ENCODE measurements at regions of chr2 and their contacts with region 1.

Region 1: GRCh38 chr2:24382363-24383073 is 22.2 kb upstream of the ITSN2 start:
- DNase-seq: peak; percentile 78
- ATAC-seq: peak; percentile 97
- H3K4me3 ChIP-seq: no peak overlapping the region
- H3K27ac ChIP-seq: no peak overlapping the region
- H3K4me1 ChIP-seq: no peaks in the 10 kb centered on the region
- H3K27me3 ChIP-seq: no peaks in the 10 kb centered on the region
- CTCF ChIP-seq: peak; percentile 62

Region 2: DNA sequence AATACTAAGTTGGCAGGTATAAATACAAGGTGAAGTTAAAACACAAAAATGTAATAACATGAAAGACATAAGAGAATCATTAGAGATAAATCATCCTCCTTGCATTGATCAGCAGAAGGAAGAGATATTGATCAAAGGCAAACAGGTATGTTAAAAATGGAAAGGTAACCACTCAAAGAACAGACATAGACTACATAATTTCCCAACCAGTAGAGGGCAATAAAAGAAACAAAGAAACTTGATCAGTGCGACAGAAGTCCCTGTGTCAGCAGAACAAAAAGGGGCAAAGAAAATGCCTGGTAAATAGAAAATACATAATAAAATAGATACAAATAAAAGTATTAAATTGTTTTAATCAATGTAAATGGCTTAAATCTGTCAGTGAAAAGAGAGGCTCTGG is 154.0 kb before region 1 on chr2:
- CTCF ChIA-PET with region 1: no interaction called
- POLR2A ChIA-PET with region 1: no interaction called
- intact Hi-C with region 1: loop called (anchors 1 kb)
- DNase-seq: peak; percentile 59
- ATAC-seq: peak; percentile 74
- H3K4me3 ChIP-seq: no peak overlapping the region
- H3K27ac ChIP-seq: no peak overlapping the region
- H3K4me1 ChIP-seq: peaks cover 6% of the 10 kb centered on the region; the same call in 1 of the 2 replicates
- H3K27me3 ChIP-seq: no peaks in the 10 kb centered on the region
- CTCF ChIP-seq: peak; percentile 59

Region 3: GRCh38 chr2:24471662-24472061 is 89.1 kb after region 1 on chr2:
- CTCF ChIA-PET with region 1: interaction called, 12 read pairs
- POLR2A ChIA-PET with region 1: no interaction called
- intact Hi-C with region 1: no loop called
- DNase-seq: peak; percentile 13
- ATAC-seq: no peak
- H3K4me3 ChIP-seq: no peak overlapping the region
- H3K27ac ChIP-seq: no peak overlapping the region
- H3K4me1 ChIP-seq: no peaks in the 10 kb centered on the region
- H3K27me3 ChIP-seq: no peaks in the 10 kb centered on the region
- CTCF ChIP-seq: no peak

Region 4: GRCh38 chr2:24538720-24539119 is 156.2 kb after region 1 on chr2:
- CTCF ChIA-PET with region 1: no interaction called
- POLR2A ChIA-PET with region 1: no interaction called
- intact Hi-C with region 1: no loop called
- DNase-seq: no peak
- ATAC-seq: no peak
- H3K4me3 ChIP-seq: no peak overlapping the region
- H3K27ac ChIP-seq: no peak overlapping the region
- H3K4me1 ChIP-seq: peaks cover 3% of the 10 kb centered on the region; the same call in 1 of the 2 replicates
- H3K27me3 ChIP-seq: no peaks in the 10 kb centered on the region
- CTCF ChIP-seq: no peak